Activated naive CD4-positive, alpha-beta T cell treated with anti-CD3 and anti-CD28 coated beads for 36 hours (primary cell): ENCODE measurements at regions of chr20 and their contacts with region 1.

Region 1: GRCh38 chr20:3679749-3680700 is 1.8 kb downstream of the ADAM33 start:
- DNase-seq: no peak
- H3K4me3 Mint-ChIP-seq: no peak overlapping the region
- H3K27ac Mint-ChIP-seq: no peak overlapping the region
- H3K4me1 Mint-ChIP-seq: no peaks in the 10 kb centered on the region
- H3K27me3 Mint-ChIP-seq: peaks cover 49% of the 10 kb centered on the region

Region 2: DNA sequence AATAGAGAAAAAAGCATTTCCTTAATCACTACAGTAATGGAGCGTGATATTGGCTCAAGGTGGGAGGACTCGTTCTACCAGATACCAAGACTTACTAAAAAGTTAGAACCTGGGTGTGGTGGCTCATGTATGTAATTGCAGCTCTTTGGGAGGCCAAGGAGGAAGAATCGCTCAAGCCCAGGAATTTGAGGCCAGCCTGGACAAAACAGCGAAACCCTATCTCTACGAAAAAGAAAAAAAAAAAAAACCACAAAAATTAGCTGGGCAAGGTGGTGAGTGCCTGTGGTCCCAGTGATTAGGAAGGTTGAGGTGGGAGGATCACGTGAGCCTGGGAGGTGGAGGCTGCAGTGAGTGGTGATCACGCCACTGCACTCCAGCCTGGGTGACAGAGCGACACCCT is 233.2 kb before region 1 on chr20:
- CTCF ChIA-PET with region 1: no interaction called
- intact Hi-C with region 1: no loop called
- DNase-seq: no peak
- H3K4me3 Mint-ChIP-seq: no peak overlapping the region
- H3K27ac Mint-ChIP-seq: no peak overlapping the region
- H3K4me1 Mint-ChIP-seq: no peaks in the 10 kb centered on the region
- H3K27me3 Mint-ChIP-seq: no peaks in the 10 kb centered on the region

Region 3: DNA sequence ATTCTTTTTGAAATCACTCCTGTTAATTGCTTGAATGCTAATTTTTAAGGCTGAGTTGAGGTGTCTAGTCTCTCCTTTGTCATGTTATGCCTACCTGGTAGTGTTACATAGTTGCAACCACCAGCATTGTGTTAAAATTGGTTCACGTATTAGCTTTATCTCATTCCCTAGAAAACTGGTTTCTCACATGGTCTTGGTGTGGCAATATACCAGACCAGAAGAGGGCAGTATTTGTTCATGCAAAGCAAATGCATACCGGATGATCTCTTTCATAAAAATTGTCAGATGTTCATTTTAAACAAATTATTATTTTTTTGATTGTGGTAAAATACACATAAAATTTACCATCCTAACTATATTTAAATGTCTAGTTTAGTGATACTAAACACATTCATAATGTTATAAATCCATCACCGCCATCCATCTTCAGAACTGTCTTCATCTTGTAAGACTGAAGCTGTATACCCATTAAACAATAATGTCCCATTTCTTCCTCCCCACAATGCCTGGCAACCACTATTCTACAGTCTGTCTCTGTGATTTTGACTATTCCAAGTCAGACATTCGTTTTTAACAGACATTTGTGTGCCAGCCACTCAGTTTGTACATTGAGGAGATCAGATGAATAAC is 116.4 kb before region 1 on chr20:
- CTCF ChIA-PET with region 1: no interaction called
- intact Hi-C with region 1: loop called (anchors 10 kb)
- DNase-seq: peak; percentile 19
- H3K4me3 Mint-ChIP-seq: no peak overlapping the region
- H3K27ac Mint-ChIP-seq: no peak overlapping the region
- H3K4me1 Mint-ChIP-seq: no peaks in the 10 kb centered on the region
- H3K27me3 Mint-ChIP-seq: no peaks in the 10 kb centered on the region

Region 4: GRCh38 chr20:3606021-3606420 is 74.0 kb before region 1 on chr20:
- CTCF ChIA-PET with region 1: no interaction called
- intact Hi-C with region 1: no loop called
- DNase-seq: no peak
- H3K4me3 Mint-ChIP-seq: no peak overlapping the region
- H3K27ac Mint-ChIP-seq: no peak overlapping the region
- H3K4me1 Mint-ChIP-seq: peaks cover 3% of the 10 kb centered on the region
- H3K27me3 Mint-ChIP-seq: no peaks in the 10 kb centered on the region

Region 5: DNA sequence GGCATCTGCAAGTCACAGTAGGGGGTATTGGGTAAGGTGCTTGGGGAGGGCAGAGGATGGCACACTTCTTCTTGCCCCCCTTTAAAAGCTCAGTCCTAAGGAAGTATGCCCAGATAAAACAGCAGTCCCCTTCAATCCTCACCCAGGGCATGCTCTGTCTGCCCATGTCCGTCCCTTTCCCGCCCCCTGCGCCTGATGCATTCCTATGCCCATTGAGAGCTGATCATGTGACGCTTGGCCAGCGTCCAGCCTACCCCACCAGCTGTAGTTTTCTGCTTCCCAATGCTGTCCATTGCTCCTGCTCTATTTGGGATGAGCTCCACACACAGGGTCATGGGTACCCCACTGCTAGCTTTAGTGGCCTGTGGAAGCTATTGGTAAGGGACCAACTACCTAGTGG is 24.1 kb after region 1 on chr20:
- CTCF ChIA-PET with region 1: interaction called, 11 read pairs
- intact Hi-C with region 1: no loop called
- DNase-seq: no peak
- H3K4me3 Mint-ChIP-seq: no peak overlapping the region
- H3K27ac Mint-ChIP-seq: no peak overlapping the region
- H3K4me1 Mint-ChIP-seq: no peaks in the 10 kb centered on the region
- H3K27me3 Mint-ChIP-seq: peaks cover 2% of the 10 kb centered on the region

Region 6: GRCh38 chr20:3710703-3711483 is 30.9 kb after region 1 on chr20:
- CTCF ChIA-PET with region 1: interaction called, 46 read pairs
- intact Hi-C with region 1: loop called (anchors 1 kb)
- DNase-seq: peak; percentile 80
- H3K4me3 Mint-ChIP-seq: no peak overlapping the region
- H3K27ac Mint-ChIP-seq: no peak overlapping the region
- H3K4me1 Mint-ChIP-seq: no peaks in the 10 kb centered on the region
- H3K27me3 Mint-ChIP-seq: peaks cover 3% of the 10 kb centered on the region

Region 7: GRCh38 chr20:3753098-3753980 is 73.3 kb after region 1 on chr20:
- CTCF ChIA-PET with region 1: interaction called, 4 read pairs
- intact Hi-C with region 1: loop called (anchors 2 kb)
- DNase-seq: peak; percentile 81
- H3K4me3 Mint-ChIP-seq: no peak overlapping the region
- H3K27ac Mint-ChIP-seq: no peak overlapping the region
- H3K4me1 Mint-ChIP-seq: peaks cover 7% of the 10 kb centered on the region
- H3K27me3 Mint-ChIP-seq: no peaks in the 10 kb centered on the region

Region 8: GRCh38 chr20:3854462-3854871 is 174.4 kb after region 1 on chr20:
- CTCF ChIA-PET with region 1: interaction called, 4 read pairs
- intact Hi-C with region 1: loop called (anchors 1 kb)
- DNase-seq: no peak
- H3K4me3 Mint-ChIP-seq: no peak overlapping the region
- H3K27ac Mint-ChIP-seq: no peak overlapping the region
- H3K4me1 Mint-ChIP-seq: peaks cover 9% of the 10 kb centered on the region
- H3K27me3 Mint-ChIP-seq: no peaks in the 10 kb centered on the region